ENCODE measurements at regions of chr7 and their contacts with region 1.

Region 1: GRCh38 chr7:28853834-28854749 is 104.0 kb downstream of the TRIL start:
- DNase-seq: peak; percentile 77 to 98 (median 85)

Region 2: DNA sequence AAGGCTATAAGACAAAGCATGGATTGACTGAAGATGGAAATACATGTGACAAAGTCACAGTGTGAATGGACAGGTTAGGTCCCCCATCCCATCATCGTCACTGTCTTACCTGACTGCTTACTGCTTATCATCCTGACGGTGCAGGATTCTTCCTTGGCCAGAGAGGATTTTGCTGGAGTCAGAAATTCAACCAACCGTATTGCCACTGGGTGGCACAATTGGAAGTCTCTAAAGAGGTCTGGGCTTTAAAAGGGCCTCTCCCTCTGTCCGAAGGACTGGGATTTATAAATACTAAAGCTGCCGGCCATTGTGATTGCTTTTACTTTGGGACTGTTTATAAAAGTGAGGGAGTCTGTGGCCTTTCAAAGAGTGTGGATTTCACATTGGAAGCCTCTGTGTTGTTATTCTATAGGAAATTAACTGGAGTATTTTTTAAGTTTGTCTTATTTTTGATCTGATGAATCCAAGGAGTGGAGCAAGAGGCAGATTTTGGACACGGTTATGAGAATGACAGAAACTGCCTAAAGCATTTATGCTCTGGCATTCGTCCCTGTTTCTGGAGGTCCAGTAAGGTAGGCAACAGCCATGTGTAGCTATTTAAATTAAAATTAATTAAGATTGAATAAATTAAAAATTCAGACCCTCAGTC is 555.1 kb before region 1 on chr7:
- intact Hi-C with region 1: loop called (anchors 2 kb)
- DNase-seq: peak in 6 of 10 donors; percentile 32 to 82 (median 48)

Region 3: DNA sequence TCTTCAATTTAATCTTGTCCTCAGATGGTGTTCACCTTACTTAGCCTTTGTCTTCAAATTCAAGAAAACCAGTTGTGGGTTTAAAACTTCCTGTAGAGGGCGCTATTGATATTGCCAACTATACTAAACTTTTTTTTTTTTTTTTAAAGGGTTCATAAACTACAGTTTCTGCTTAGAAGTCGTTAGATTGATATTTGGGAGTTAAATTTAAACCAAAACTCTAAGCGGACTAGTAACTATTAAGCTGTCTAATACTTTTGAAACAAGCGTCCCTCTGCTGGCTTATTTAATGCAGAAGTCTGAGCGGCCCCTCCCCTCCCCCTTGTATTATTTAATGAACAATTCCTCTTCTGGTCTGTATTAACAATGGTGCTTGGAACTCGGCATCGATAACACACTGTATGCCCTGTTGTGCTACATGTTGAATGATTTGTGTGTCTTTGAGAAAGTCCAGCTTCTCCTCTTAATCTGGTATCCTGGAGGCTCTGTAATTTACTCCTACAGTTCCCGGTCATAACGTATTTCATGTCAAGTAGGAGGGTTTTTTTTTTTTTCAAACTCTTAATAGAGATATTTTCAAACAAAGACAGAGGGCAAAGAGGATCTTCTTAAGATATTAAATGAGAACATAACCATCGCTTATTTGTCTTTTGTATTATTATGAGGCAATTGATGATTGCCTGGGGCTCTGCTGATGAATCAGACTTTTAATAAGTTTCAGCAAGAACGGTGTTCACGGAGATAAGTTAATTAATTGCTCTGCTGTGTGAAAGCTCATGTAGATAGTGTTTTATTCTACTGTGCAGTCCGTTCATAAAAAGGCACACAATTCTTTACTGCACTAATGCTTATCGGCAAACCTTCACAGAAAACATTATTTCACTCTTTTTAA is 464.3 kb before region 1 on chr7:
- intact Hi-C with region 1: loop called (anchors 2 kb)
- DNase-seq: no peak

Region 4: DNA sequence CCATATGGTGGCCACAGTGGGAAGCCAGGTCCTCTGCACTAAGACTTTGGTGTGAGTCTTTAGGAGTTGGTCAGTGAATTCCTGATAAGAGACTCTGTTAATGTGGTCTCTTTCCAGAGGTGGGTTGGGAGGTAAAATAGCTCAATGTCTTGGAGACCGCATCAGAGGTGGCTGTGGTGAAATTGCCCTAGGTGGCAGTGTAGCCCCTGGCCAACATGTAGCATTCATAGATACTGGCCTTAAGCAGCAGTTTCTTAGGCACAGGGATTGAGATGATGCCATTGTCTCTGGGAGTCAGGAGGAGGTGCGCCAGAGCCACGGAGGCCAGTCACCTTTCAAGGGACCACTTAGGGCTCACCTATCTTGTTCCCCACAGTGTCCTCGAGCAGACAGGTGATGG is 239.0 kb before region 1 on chr7:
- intact Hi-C with region 1: loop called (anchors 5 kb)
- DNase-seq: peak in 3 of 10 donors; percentile 14 to 82 (median 39)

Region 5: GRCh38 chr7:28685644-28686417 is 168.3 kb before region 1 on chr7:
- intact Hi-C with region 1: loop called (anchors 5 kb)
- DNase-seq: peak; percentile 82 to 98 (median 90)

Region 6: DNA sequence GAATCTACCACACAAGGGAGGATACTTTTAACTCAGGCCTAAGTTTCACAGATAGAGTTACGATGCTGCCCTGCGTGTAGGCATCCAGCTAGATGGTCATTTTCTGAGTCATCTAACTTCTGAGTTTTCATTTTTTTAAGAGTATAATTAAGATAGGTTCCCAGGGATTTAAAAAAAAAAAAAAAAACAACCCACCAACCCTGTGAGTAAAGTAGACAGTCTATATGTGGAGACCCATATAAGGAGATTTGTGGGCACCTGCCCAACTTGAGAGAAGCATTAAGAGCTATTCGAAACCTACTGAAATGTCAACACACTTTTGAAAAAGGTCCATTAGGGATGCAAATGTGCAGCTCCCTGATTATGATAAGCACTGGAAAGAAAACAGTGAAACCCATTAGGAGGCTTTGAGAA is 153.3 kb before region 1 on chr7:
- intact Hi-C with region 1: no loop called
- DNase-seq: no peak

Region 7: GRCh38 chr7:28754027-28754426 is 100.1 kb before region 1 on chr7:
- intact Hi-C with region 1: loop called (anchors 5 kb)
- DNase-seq: peak; percentile 61 to 98 (median 81)

Region 8: DNA sequence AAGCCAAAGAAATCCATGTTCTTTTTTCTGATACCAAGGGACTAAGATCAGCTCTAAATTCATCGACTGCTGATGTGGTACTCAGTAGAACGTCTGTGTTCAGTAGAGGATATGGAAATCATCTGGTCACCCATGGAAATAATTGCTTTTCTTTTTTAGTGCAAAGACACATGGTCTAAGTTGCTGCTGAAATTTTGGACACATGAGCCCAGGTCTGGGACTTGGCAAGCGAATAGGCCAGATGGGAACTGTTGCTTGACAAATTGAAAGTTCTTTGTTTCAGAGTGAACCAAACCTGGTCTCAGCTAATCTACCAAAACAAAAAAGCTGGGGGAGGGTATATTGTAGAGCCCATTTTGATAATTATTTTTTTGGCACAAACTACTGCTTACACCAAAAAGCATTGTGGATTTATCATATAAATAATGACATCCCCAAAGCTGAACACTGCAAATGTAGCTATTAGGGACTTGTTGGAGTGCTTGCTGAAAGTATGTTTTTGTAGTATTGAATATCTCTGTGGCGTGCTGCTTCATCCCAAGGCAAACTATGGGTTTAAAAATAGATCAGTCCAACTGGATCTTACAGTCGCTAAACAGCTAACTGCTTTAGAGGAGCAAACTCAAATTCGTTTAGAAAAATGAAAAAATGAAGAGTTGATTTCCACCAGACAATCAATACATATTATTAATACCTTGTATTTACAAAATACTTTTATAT is 40.7 kb before region 1 on chr7:
- intact Hi-C with region 1: loop called (anchors 5 kb)
- DNase-seq: no peak

Region 9: DNA sequence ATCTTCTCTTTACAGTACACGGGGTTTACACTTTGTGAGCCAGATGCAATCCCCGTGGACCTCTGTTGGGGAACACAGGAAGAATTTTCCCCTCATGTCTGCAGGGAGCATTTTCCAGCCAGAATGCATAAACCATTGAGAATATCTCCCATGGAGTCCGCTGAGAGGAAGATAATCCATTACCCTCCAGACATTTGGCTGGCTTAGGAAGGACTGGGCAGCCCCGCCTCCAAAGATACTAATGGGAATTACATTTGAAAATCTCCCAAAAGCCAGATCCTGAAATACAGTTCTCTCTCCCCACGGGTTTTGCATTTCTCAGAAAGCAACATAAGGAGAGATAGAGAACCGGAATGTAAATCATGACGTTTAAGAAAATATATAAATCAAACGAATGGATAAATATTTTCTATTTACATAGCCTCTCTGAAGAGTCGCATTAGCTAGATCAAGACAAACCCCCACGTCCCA is 50.5 kb after region 1 on chr7:
- intact Hi-C with region 1: no loop called
- DNase-seq: no peak

Measured in posterior cingulate gyrus (tissue), 11 donors.